ENCODE measurements at regions of chr4 and their contacts with region 1.

Region 1: GRCh38 chr4:114187611-114188010 is 208.2 kb upstream of the ARSJ start:
- DNase-seq: no peak
- H3K4me3 ChIP-seq: no peak overlapping the region
- H3K27ac ChIP-seq: no peak overlapping the region
- H3K4me1 ChIP-seq: no peaks in the 10 kb centered on the region
- H3K27me3 ChIP-seq: no peaks in the 10 kb centered on the region
- CTCF ChIP-seq: no peak

Region 2: GRCh38 chr4:113383111-113383785 is 804.4 kb before region 1 on chr4:
- intact Hi-C with region 1: loop called (anchors 5 kb)
- DNase-seq: no peak
- H3K4me3 ChIP-seq: no peak overlapping the region
- H3K27ac ChIP-seq: peak overlapping the region; percentile 56 to 62
- H3K4me1 ChIP-seq: peaks cover 9 to 22% of the 10 kb centered on the region in 2 donors
- H3K27me3 ChIP-seq: no peaks in the 10 kb centered on the region
- CTCF ChIP-seq: no peak

Region 3: GRCh38 chr4:114093221-114093715 is 94.3 kb before region 1 on chr4:
- intact Hi-C with region 1: no loop called
- DNase-seq: no peak
- H3K4me3 ChIP-seq: no peak overlapping the region
- H3K27ac ChIP-seq: no peak overlapping the region
- H3K4me1 ChIP-seq: no peaks in the 10 kb centered on the region
- H3K27me3 ChIP-seq: no peaks in the 10 kb centered on the region
- CTCF ChIP-seq: no peak

Measured in ascending aorta (tissue), 2 donors.